ENCODE measurements at regions of chr10 and their contacts with region 1.

Region 1: DNA sequence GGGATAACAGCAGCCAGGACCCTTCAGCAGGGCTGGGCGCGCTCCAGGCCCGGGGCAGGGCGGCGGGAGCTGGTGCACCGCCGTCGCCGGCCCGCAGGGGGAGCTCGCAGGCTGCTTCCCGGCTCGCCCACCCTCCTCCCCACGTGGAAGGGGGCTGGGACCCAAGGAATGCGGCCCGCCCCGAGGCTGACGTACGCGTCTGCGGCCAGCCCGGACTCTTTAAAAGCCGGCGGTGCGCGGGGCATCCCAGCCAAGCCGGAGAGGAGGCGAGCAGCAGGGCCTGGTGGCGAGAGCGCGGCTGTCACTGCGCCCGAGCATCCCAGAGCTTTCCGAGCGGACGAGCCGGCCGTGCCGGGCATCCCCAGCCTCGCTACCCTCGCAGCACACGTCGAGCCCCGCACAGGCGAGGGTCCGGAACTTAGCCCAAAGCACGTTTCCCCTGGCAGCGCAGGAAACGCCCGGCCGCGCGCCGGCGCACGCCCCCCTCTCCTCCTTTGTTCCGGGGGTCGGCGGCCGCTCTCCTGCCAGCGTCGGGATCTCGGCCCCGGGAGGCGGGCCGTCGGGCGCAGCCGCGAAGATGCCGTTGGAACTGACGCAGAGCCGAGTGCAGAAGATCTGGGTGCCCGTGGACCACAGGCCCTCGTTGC is at the start of gene PFKFB3:
- DNase-seq: peak; percentile 95

Region 2: DNA sequence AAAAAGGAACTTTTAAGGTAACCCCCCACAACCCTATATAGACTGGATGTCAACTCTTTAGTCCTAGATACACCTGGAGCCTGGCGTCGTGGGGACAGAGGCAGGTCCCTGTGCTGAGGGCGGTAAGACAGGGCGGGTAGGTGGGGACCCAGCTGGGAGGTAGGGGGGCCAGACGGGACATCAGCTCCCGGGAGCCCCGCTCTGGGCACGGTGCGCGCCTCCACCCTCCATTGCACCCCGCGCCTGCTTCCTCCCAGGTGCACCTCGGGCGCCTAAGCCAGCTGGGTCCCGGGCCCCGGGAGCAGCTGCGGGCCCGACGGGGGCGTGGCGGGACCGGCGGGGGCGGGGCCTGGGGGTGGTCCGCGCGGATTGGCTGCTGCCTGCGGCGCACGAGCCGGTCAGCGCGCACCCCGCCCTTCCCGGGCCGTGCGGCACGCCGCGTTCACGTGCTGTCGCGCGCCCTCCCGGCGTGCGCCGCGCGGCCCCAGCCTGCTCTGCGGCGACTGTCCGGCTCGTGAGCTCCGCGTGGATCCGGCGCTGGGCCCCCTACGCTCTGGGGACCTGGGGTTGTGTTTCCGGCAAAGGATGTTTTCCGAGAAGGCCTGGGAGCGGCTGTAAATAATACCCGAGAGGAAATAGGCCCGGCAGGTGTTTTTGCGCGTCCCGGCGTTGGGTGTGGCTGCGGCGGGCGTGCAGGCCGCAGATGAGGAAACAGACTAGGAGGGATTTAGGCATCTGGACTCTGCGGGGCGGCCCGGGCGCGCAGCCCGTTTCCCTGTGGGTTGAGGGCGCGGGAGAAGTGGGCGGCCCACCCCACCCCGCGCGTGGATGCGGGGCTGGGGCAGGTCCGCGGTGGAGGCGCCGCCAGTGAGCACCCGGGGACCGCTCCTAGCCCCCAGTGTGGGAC is 39.2 kb before region 1 on chr10:
- CTCF ChIA-PET with region 1: interaction called, 3 read pairs
- POLR2A ChIA-PET with region 1: interaction called, 11 read pairs
- DNase-seq: peak; percentile 96

Region 3: DNA sequence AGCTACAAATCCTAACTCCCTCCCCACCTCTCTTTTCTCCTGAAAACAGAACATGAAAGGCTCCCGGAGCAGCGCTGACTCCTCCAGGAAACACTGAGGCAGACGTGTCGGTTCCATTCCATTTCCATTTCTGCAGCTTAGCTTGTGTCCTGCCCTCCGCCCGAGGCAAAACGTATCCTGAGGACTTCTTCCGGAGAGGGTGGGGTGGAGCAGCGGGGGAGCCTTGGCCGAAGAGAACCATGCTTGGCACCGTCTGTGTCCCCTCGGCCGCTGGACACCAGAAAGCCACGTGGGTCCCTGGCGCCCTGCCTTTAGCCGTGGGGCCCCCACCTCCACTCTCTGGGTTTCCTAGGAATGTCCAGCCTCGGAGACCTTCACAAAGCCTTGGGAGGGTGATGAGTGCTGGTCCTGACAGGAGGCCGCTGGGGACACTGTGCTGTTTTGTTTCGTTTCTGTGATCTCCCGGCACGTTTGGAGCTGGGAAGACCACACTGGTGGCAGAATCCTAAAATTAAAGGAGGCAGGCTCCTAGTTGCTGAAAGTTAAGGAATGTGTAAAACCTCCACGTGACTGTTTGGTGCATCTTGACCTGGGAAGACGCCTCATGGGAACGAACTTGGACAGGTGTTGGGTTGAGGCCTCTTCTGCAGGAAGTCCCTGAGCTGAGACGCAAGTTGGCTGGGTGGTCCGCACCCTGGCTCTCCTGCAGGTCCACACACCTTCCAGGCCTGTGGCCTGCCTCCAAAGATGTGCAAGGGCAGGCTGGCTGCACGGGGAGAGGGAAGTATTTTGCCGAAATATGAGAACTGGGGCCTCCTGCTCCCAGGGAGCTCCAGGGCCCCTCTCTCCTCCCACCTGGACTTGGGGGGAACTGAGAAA is 30.3 kb after region 1 on chr10:
- CTCF ChIA-PET with region 1: no interaction called
- POLR2A ChIA-PET with region 1: no interaction called
- DNase-seq: no peak

Region 4: DNA sequence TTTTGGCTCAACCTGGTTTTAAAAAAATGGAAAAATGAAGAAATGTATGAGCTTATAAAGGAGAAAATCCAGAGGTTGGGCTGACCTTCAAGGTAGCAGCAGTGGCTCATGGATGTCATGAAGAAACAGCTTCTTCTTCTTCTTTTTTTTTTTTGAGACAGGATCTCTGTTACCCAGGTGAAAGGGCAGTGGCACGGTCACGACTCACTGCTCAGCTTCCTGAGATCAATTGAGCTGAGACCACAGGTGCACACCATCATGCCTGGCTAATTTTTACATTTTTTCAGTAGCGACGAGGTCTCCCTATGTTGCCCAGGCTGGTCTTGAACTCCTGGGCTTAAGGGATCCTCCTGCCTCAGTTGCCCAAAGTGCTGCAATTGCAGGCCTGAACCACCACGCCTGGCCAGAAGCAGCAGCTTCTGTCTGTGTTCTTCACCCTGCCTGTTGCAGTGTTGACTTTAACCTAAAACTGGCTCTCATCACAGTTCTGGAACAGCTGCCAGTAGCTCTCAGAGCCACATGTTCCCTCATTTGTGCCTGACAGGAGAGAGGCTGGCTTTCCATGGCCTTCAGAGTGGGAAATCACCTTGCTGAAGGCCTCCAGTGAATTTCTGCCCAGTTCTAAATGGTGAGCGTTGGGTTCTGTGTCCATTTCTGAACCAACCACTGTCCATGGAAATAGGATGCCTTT is 117.7 kb after region 1 on chr10:
- CTCF ChIA-PET with region 1: no interaction called
- POLR2A ChIA-PET with region 1: no interaction called
- DNase-seq: no peak

Region 5: DNA sequence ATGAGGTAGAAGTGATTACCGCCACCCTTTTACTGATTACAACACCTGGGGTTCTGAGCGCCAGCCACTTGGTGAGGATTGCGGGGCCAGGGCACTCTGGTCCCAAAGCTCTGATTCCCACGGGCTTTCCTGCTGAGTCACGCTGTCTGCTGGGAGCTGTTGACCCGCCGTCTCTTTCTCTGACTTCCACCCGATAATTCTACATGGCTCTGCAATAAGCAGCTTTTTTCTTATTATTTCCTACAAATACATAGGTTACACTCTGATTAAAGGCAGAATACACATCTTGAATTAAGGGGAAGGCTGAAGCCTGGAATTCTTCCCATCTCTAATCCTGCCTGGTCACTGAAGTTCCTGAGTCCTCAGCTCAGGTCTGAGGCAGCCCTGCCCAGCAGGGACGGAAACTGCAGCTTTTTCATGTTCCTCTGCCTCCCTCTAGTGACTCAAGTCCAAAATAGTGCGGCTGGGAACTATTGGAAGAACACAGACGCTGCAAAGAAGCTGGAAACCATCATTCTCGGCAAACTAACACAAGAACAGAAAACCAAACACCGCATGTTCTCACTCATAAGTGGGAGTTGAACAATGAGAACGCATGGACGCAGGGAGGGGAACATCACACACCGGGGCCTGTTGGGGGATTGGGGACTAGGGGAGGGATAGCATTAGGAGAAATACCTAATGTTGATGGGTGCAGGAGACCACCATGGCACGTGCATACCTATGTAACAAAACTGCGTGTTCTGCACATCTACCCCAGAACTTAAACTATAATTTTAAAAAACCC is 198.9 kb after region 1 on chr10:
- CTCF ChIA-PET with region 1: interaction called, 37 read pairs
- POLR2A ChIA-PET with region 1: interaction called, 20 read pairs
- DNase-seq: peak; percentile 85

Measured in HEK293T (cell line).